ENCODE measurements at regions of chr12 and their contacts with region 1.

Region 1: GRCh38 chr12:1117970-1118563 is 127.0 kb downstream of the ERC1 start:
- DNase-seq: peak; percentile 66
- ATAC-seq: peak; percentile 32; the same call in 1 of the 2 replicates
- H3K4me3 Mint-ChIP-seq: no peak overlapping the region
- H3K27ac Mint-ChIP-seq: no peak overlapping the region
- H3K4me1 Mint-ChIP-seq: no peaks in the 10 kb centered on the region
- H3K27me3 Mint-ChIP-seq: peaks cover 40% of the 10 kb centered on the region
- CTCF ChIP-seq: peak; percentile 91

Region 2: GRCh38 chr12:1093166-1093751 is 24.8 kb before region 1 on chr12:
- CTCF ChIA-PET with region 1: interaction called, 23 read pairs
- POLR2A ChIA-PET with region 1: no interaction called
- DNase-seq: no peak
- ATAC-seq: peak; percentile 79
- H3K4me3 Mint-ChIP-seq: no peak overlapping the region
- H3K27ac Mint-ChIP-seq: no peak overlapping the region
- H3K4me1 Mint-ChIP-seq: no peaks in the 10 kb centered on the region
- H3K27me3 Mint-ChIP-seq: no peaks in the 10 kb centered on the region
- CTCF ChIP-seq: peak; percentile 39; the same call in 1 of the 2 replicates

Region 3: GRCh38 chr12:1206118-1206734 is 88.2 kb after region 1 on chr12:
- CTCF ChIA-PET with region 1: interaction called, 13 read pairs
- POLR2A ChIA-PET with region 1: no interaction called
- DNase-seq: no peak
- ATAC-seq: no peak
- H3K4me3 Mint-ChIP-seq: no peak overlapping the region
- H3K27ac Mint-ChIP-seq: 0 out of 2 replicates have a peak overlapping the region, but pooled peaks have one; percentile 2
- H3K4me1 Mint-ChIP-seq: peaks cover 19% of the 10 kb centered on the region
- H3K27me3 Mint-ChIP-seq: no peaks in the 10 kb centered on the region
- CTCF ChIP-seq: no peak

Region 4: GRCh38 chr12:1344245-1344644 is 226.2 kb after region 1 on chr12:
- CTCF ChIA-PET with region 1: interaction called, 11 read pairs
- POLR2A ChIA-PET with region 1: no interaction called
- DNase-seq: no peak
- ATAC-seq: no peak
- H3K4me3 Mint-ChIP-seq: no peak overlapping the region
- H3K27ac Mint-ChIP-seq: no peak overlapping the region
- H3K4me1 Mint-ChIP-seq: no peaks in the 10 kb centered on the region
- H3K27me3 Mint-ChIP-seq: no peaks in the 10 kb centered on the region
- CTCF ChIP-seq: no peak

Region 5: DNA sequence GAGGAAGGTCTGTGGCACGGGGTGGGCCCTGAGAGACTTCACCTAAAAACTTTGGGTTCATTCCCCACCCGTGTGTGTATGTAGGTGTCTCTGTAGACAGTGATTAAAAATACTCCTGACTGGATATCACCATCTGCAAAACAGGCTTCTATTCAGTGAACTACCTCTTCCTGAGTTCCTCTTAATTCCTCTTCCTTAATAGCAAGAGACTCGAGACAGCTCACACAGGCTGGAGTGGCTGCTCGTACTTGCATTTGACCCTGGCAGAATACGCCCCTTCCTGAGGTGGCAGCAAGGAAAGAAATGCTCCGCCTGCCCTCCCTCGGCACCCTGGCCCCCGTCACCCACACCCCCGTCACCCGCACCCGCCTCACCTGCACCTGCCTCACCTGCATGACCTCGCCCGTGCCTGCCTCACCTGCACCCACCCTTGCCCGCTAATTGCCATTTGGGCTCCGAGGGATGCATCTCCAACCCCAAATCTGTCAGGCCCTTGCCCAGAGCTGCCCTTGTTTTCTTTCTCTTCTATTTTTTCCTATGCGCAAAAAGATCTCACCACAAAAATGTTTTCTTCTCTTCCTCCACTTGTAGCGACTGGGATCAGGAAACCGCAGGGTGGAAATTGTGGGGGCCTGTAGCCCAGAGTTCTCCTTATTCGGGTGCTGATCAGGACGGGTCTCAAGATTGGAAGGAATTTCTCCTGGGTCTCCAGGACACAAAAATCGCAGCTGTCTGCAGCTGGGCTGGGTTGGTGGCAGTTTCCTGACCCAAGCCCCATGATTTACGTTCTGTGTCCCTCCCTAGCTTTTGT is 386.4 kb after region 1 on chr12:
- CTCF ChIA-PET with region 1: interaction called, 16 read pairs
- POLR2A ChIA-PET with region 1: no interaction called
- DNase-seq: no peak
- ATAC-seq: no peak
- H3K4me3 Mint-ChIP-seq: no peak overlapping the region
- H3K27ac Mint-ChIP-seq: no peak overlapping the region
- H3K4me1 Mint-ChIP-seq: no peaks in the 10 kb centered on the region
- H3K27me3 Mint-ChIP-seq: no peaks in the 10 kb centered on the region; the same call in 1 of the 2 replicates
- CTCF ChIP-seq: no peak

Region 6: DNA sequence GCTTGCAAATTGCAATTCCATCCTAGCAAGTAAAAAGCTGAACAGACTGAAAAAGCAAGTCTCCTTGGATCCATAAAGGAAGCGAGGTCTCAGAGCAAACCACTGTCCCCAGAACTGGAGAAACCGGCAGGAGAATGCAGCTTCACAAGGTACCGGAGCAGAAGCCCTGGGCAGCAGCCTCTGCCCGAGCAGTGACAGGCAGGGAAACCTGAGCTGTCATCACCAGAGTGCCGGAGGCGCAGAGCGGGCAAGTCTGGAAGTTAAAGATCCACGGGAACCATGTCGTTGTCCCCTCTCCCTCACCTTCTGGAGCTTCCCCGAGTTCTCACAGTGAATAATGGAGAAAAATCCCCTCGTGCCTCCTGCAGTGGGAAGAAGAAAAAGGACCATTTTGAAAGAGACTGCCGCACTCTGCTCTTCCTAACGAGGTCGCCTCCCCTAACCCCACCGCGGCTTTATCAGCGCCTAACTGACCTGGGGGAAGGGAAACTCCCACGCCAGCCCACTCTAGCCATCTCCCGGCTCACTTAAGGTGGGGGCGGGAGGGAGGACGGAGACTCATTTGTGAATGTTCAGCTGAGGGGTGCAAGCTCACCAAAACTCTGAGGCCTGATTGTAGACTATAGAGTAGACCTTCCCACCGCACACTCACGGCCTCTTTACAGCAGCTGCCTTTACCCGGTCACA is 448.5 kb after region 1 on chr12:
- CTCF ChIA-PET with region 1: interaction called, 11 read pairs
- POLR2A ChIA-PET with region 1: no interaction called
- DNase-seq: peak; percentile 30
- ATAC-seq: peak; percentile 74
- H3K4me3 Mint-ChIP-seq: no peak overlapping the region
- H3K27ac Mint-ChIP-seq: no peak overlapping the region
- H3K4me1 Mint-ChIP-seq: peaks cover 7% of the 10 kb centered on the region
- H3K27me3 Mint-ChIP-seq: peaks cover 6% of the 10 kb centered on the region
- CTCF ChIP-seq: no peak

Region 7: GRCh38 chr12:1594261-1595025 is 476.4 kb after region 1 on chr12 and contains the start of gene FBXL14:
- CTCF ChIA-PET with region 1: interaction called, 39 read pairs
- POLR2A ChIA-PET with region 1: no interaction called
- DNase-seq: peak; percentile 91
- ATAC-seq: peak; percentile 58
- H3K4me3 Mint-ChIP-seq: peak within 1 kb of the TSS; percentile 86
- H3K27ac Mint-ChIP-seq: no peak within 1 kb of the TSS
- H3K4me1 Mint-ChIP-seq: peaks cover 49% of the 10 kb centered on the region
- H3K27me3 Mint-ChIP-seq: peaks cover 55% of the 10 kb centered on the region
- CTCF ChIP-seq: no peak
- total RNA-seq, gene FBXL14: 12.0 to 14.6 TPM (median 12.9 TPM) in 3 replicates